CD8-positive, alpha-beta T cell (primary cell): ENCODE measurements at regions of chr2 and their contacts with region 1.

Region 1: DNA sequence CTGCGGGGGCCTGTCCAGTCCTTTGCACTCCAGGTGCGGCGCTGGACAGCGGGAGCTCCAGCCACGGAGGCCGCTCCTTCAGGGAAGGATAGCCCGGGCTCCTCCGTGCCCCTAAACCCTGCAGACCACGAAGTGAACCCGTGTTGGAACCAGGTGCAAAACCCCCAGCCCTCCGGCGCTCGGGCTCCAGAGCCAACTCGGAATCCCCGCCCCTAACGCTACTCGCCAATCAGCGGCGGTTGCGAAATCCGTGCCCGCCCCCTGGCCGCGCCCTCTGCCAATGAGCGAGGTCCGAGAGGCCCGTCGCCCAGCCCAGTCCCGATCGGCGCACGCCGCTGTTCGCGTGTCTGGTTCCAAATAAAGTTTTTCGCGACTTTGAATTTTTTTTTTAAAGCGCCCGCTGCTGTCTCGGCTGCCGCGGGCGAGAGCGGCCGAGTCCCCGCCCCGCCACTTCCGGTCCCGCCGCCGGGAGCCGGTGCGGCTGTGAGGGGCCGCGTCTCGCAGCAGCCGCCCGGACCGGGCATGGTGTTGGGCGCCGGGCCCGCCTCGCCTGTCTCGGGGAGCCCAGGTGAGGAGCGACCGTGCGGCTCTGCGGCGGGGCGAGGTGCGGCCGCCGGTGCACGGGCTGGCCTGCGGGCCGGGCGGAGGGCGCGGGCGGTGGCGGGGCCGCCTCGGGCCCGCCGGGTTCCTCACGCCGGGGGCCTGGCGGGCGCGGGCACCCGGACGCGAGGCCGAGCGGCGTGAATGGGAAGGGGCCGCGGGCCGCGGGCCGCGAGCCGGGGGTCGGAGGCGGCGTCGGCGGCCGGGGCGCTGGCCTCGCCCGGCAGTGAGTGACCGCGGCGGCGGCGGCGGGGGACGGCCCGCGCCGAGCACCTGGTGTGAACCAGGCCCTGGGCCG is at the start of gene UBE2F:
- DNase-seq: peak; percentile 95 to 98 (median 97)
- ATAC-seq: peak; percentile 96
- H3K4me3 ChIP-seq: peak within 1 kb of the TSS; percentile 61 to 86
- H3K4me3 Mint-ChIP-seq: peak within 1 kb of the TSS; percentile 85
- H3K27ac ChIP-seq: peak within 1 kb of the TSS; percentile 39 to 67
- H3K27ac Mint-ChIP-seq: peak within 1 kb of the TSS; percentile 84
- H3K4me1 ChIP-seq: peaks cover 38% of the 10 kb centered on the region
- H3K4me1 Mint-ChIP-seq: peaks cover 40% of the 10 kb centered on the region
- H3K27me3 ChIP-seq: no peaks in the 10 kb centered on the region
- H3K27me3 Mint-ChIP-seq: no peaks in the 10 kb centered on the region
- CTCF ChIP-seq: no peak
- total RNA-seq, gene UBE2F: 16.5 to 18.4 TPM

Region 2: GRCh38 chr2:237085248-237086221 is 881.3 kb before region 1 on chr2 and contains the start of gene COPS8:
- CTCF ChIA-PET with region 1: no interaction called
- POLR2A ChIA-PET with region 1: no interaction called
- intact Hi-C with region 1: loop called in 1 of 2 experiments (anchors 5 kb)
- DNase-seq: peak; percentile 80 to 94 (median 90)
- ATAC-seq: peak; percentile 98
- H3K4me3 ChIP-seq: peak within 1 kb of the TSS; percentile 78 to 80
- H3K4me3 Mint-ChIP-seq: peak within 1 kb of the TSS; percentile 100
- H3K27ac ChIP-seq: peak within 1 kb of the TSS; percentile 88 to 91
- H3K27ac Mint-ChIP-seq: peak within 1 kb of the TSS; percentile 100
- H3K4me1 ChIP-seq: peaks cover 23% of the 10 kb centered on the region
- H3K4me1 Mint-ChIP-seq: peaks cover 39% of the 10 kb centered on the region
- H3K27me3 ChIP-seq: no peaks in the 10 kb centered on the region
- H3K27me3 Mint-ChIP-seq: no peaks in the 10 kb centered on the region
- CTCF ChIP-seq: peak; percentile 40
- total RNA-seq, gene COPS8: 53.2 to 56.3 TPM

Region 3: DNA sequence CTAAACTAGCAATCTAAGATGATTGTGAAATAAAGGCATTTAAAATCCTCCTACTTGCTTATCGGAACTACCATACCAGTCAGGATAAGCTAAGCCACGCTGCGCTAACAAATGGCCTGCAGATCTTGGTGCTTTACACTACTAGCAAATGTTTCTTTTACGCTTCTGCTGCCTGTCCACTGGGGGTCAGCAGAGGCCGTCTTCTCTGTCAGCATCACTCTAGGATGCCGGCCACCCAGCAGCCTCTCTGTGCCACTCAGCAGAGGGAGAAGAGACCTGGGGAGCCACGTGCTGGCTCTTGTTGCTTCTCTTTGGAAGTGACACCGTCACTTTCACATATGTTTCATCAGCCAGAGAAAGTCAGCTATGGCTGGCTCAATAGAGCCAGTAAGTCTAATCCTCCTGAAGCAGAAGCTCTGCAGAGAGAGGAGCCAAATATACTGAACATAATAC is 844.6 kb before region 1 on chr2:
- CTCF ChIA-PET with region 1: no interaction called
- POLR2A ChIA-PET with region 1: no interaction called
- intact Hi-C with region 1: no loop called
- DNase-seq: peak in 7 of 9 experiments; percentile 7 to 31 (median 17)
- ATAC-seq: peak; percentile 36
- H3K4me3 ChIP-seq: no peak overlapping the region
- H3K4me3 Mint-ChIP-seq: no peak overlapping the region
- H3K27ac ChIP-seq: no peak overlapping the region
- H3K27ac Mint-ChIP-seq: no peak overlapping the region
- H3K4me1 ChIP-seq: no peaks in the 10 kb centered on the region
- H3K4me1 Mint-ChIP-seq: no peaks in the 10 kb centered on the region
- H3K27me3 ChIP-seq: no peaks in the 10 kb centered on the region
- H3K27me3 Mint-ChIP-seq: peaks cover 2% of the 10 kb centered on the region
- CTCF ChIP-seq: no peak

Region 4: DNA sequence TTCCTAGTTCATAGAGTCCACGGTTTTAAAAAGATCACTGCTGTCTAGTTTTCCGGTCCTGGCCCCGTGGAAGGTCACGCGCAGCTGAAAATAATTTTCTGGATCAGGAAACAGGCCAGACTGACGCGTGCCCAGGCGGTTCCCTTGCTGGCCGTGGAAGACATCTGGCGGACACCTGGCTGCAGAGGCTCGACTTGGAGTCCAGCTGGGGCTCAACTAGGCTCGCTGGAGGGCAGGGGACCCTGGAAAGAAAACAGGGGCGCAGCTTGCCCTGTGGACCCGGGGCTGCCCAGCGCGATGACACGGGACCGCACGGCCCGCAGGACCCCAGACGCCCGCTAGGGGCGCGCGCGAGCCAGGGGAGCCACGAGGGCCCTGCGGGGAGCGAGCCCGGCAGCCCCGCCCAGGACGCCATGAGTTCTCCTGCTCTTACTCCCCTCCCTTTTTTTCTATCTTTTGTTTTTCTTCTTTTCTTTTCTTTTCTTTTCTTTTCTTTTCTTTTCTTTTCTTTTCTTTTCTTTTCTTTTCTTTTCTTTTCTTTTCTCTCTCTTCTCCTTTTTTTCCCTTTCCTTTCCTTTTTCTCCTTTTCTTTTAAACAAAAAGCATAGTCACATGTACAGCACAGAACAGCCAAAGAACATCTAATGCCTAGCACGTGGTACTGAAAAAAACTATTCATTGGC is 43.2 kb before region 1 on chr2:
- CTCF ChIA-PET with region 1: interaction called, 8 read pairs
- POLR2A ChIA-PET with region 1: no interaction called
- intact Hi-C with region 1: loop called in 1 of 2 experiments (anchors 1 kb)
- DNase-seq: peak; percentile 71 to 89 (median 75)
- ATAC-seq: peak; percentile 100
- H3K4me3 ChIP-seq: peak overlapping the region; percentile 46 to 48
- H3K4me3 Mint-ChIP-seq: peak overlapping the region; percentile 29
- H3K27ac ChIP-seq: no peak overlapping the region
- H3K27ac Mint-ChIP-seq: no peak overlapping the region
- H3K4me1 ChIP-seq: peaks cover 5% of the 10 kb centered on the region
- H3K4me1 Mint-ChIP-seq: peaks cover 10% of the 10 kb centered on the region
- H3K27me3 ChIP-seq: no peaks in the 10 kb centered on the region
- H3K27me3 Mint-ChIP-seq: no peaks in the 10 kb centered on the region
- CTCF ChIP-seq: peak; percentile 98

Region 5: DNA sequence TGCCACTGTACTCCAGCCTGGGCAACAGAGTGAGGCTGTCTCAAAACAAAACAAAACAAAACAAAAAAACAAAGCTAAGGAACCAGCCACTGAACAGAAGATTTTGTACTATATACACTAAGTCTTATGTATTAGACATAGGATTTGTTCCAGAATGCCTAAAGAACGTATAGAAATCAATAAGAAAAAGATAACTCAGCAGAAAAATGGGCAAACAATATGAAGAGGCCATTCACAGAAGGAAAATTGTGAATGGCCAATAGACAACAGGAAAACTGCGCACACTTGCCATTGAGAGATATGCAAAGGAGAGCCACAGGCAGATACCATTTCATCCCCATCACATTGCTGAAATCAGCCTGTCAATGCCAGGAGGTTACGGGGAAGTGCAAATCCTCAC is 14.9 kb before region 1 on chr2:
- CTCF ChIA-PET with region 1: no interaction called
- POLR2A ChIA-PET with region 1: no interaction called
- intact Hi-C with region 1: no loop called
- DNase-seq: no peak
- ATAC-seq: no peak
- H3K4me3 ChIP-seq: no peak overlapping the region
- H3K4me3 Mint-ChIP-seq: no peak overlapping the region
- H3K27ac ChIP-seq: no peak overlapping the region
- H3K27ac Mint-ChIP-seq: no peak overlapping the region
- H3K4me1 ChIP-seq: peaks cover 7% of the 10 kb centered on the region
- H3K4me1 Mint-ChIP-seq: peaks cover 6% of the 10 kb centered on the region
- H3K27me3 ChIP-seq: peaks cover 0 to 8% of the 10 kb centered on the region in 2 experiments
- H3K27me3 Mint-ChIP-seq: peaks cover 12% of the 10 kb centered on the region
- CTCF ChIP-seq: no peak

Region 6: DNA sequence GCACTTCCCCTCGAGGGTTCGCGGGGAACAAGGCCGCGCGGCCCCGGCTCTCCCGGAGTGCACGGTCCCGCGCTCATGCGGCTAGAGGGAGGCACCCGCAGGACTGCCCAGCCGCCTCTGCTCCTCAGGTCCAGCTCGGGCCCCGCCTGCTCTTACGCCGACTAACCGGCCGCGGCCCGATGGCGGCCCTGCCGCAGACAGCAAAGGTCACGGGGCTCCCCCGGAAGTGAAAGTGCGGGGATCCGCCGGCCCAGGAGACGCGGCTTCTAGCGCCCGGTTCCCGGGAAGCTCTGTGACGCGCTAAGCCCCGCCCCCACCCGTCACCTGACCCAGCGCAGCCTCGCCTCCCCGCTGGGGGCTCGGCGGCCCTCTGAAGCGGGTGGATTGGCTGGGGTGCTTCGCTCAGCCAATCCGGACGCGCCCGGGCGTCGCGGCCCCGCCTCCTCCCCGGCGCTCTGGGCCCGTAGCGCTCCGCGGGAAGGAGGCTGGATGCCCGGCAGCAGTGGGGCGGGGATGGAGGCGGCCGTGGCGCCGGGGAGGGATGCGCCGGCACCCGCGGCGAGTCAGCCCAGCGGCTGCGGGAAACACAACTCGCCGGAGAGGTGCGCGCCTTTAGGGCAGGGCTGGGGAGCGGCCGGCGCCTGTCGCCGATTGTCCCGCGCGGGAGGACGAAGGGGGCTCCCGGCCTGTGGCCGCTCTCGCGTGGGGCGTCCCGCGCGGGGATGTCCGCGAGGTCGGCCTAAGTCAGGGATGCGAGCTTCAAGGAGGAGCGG is 93.9 kb after region 1 on chr2 and contains the start of gene SCLY:
- CTCF ChIA-PET with region 1: interaction called, 3 read pairs
- POLR2A ChIA-PET with region 1: interaction called, 4 read pairs
- intact Hi-C with region 1: loop called (anchors 1 kb)
- DNase-seq: peak; percentile 90 to 99 (median 96)
- ATAC-seq: peak; percentile 97
- H3K4me3 ChIP-seq: peak within 1 kb of the TSS; percentile 77 to 88
- H3K4me3 Mint-ChIP-seq: peak within 1 kb of the TSS; percentile 81
- H3K27ac ChIP-seq: peak within 1 kb of the TSS; percentile 81 to 83
- H3K27ac Mint-ChIP-seq: peak within 1 kb of the TSS; percentile 89
- H3K4me1 ChIP-seq: peaks cover 16% of the 10 kb centered on the region
- H3K4me1 Mint-ChIP-seq: peaks cover 39% of the 10 kb centered on the region
- H3K27me3 ChIP-seq: no peaks in the 10 kb centered on the region
- H3K27me3 Mint-ChIP-seq: peaks cover 3% of the 10 kb centered on the region
- CTCF ChIP-seq: no peak
- total RNA-seq, gene SCLY: 5.8 to 11.8 TPM

Region 7: GRCh38 chr2:238081150-238081549 is 114.3 kb after region 1 on chr2:
- CTCF ChIA-PET with region 1: no interaction called
- POLR2A ChIA-PET with region 1: no interaction called
- intact Hi-C with region 1: no loop called
- DNase-seq: no peak
- ATAC-seq: no peak
- H3K4me3 ChIP-seq: no peak overlapping the region
- H3K4me3 Mint-ChIP-seq: no peak overlapping the region
- H3K27ac ChIP-seq: no peak overlapping the region
- H3K27ac Mint-ChIP-seq: no peak overlapping the region
- H3K4me1 ChIP-seq: no peaks in the 10 kb centered on the region
- H3K4me1 Mint-ChIP-seq: no peaks in the 10 kb centered on the region
- H3K27me3 ChIP-seq: no peaks in the 10 kb centered on the region
- H3K27me3 Mint-ChIP-seq: no peaks in the 10 kb centered on the region
- CTCF ChIP-seq: no peak

Region 8: GRCh38 chr2:238231251-238231793 is 264.5 kb after region 1 on chr2:
- CTCF ChIA-PET with region 1: no interaction called
- POLR2A ChIA-PET with region 1: no interaction called
- intact Hi-C with region 1: loop called in 1 of 2 experiments (anchors 2 kb)
- DNase-seq: peak; percentile 61 to 89 (median 81)
- ATAC-seq: peak; percentile 88
- H3K4me3 ChIP-seq: peak overlapping the region; percentile 49 to 79
- H3K4me3 Mint-ChIP-seq: peak overlapping the region; percentile 86
- H3K27ac ChIP-seq: peak overlapping the region in 1 of 2 experiments; percentile 10
- H3K27ac Mint-ChIP-seq: no peak overlapping the region
- H3K4me1 ChIP-seq: peaks cover 20% of the 10 kb centered on the region
- H3K4me1 Mint-ChIP-seq: peaks cover 25% of the 10 kb centered on the region
- H3K27me3 ChIP-seq: no peaks in the 10 kb centered on the region
- H3K27me3 Mint-ChIP-seq: peaks cover 19% of the 10 kb centered on the region
- CTCF ChIP-seq: no peak

Region 9: GRCh38 chr2:238263204-238264071 is 296.6 kb after region 1 on chr2:
- CTCF ChIA-PET with region 1: interaction called, 13 read pairs
- POLR2A ChIA-PET with region 1: no interaction called
- intact Hi-C with region 1: loop called in 1 of 2 experiments (anchors 1 kb)
- DNase-seq: peak; percentile 57 to 82 (median 77)
- ATAC-seq: peak; percentile 67
- H3K4me3 ChIP-seq: no peak overlapping the region
- H3K4me3 Mint-ChIP-seq: no peak overlapping the region
- H3K27ac ChIP-seq: no peak overlapping the region
- H3K27ac Mint-ChIP-seq: no peak overlapping the region
- H3K4me1 ChIP-seq: no peaks in the 10 kb centered on the region
- H3K4me1 Mint-ChIP-seq: peaks cover 5% of the 10 kb centered on the region
- H3K27me3 ChIP-seq: no peaks in the 10 kb centered on the region
- H3K27me3 Mint-ChIP-seq: no peaks in the 10 kb centered on the region
- CTCF ChIP-seq: peak; percentile 78

Region 10: DNA sequence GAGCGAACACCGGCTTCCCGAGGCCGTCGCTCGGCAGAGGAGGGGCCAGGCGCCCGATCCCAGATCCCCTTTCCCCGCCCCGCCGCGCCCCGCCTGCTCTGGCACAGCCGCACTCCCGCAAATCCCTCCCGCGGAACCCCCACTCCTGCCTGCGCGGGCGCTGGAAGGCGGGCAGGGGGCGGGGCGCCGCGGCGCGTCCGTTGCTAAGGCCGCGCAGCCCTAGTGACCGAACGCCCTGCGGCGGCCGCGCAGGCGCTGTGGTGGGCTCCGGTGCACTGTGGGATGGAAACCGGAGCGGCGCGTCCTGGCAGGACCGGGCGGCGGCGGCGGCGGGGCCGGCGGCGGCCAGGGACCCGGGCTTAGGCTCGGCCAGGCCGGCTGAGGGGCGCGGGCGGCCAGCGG is 353.4 kb after region 1 on chr2 and contains the start of gene TRAF3IP1:
- CTCF ChIA-PET with region 1: no interaction called
- POLR2A ChIA-PET with region 1: no interaction called
- intact Hi-C with region 1: loop called in 1 of 2 experiments (anchors 2 kb)
- DNase-seq: peak; percentile 70 to 92 (median 84)
- ATAC-seq: peak; percentile 94
- H3K4me3 ChIP-seq: peak within 1 kb of the TSS; percentile 53 to 58
- H3K4me3 Mint-ChIP-seq: peak within 1 kb of the TSS; percentile 84
- H3K27ac ChIP-seq: no peak within 1 kb of the TSS
- H3K27ac Mint-ChIP-seq: peak within 1 kb of the TSS; percentile 22
- H3K4me1 ChIP-seq: peaks cover 19% of the 10 kb centered on the region
- H3K4me1 Mint-ChIP-seq: peaks cover 24% of the 10 kb centered on the region
- H3K27me3 ChIP-seq: no peaks in the 10 kb centered on the region
- H3K27me3 Mint-ChIP-seq: peaks cover 4% of the 10 kb centered on the region
- CTCF ChIP-seq: no peak
- total RNA-seq, gene TRAF3IP1: 6.1 to 8.6 TPM